Right ventricle myocardium inferior (tissue), 1 donor: ENCODE measurements at regions of chr14 and their contacts with region 1.

Region 1: GRCh38 chr14:92783816-92784431 is 10.2 kb upstream of the GOLGA5 start:
- DNase-seq: no peak
- ATAC-seq: peak; percentile 56

Region 2: GRCh38 chr14:92686900-92687444 is 97.0 kb before region 1 on chr14:
- intact Hi-C with region 1: loop called (anchors 2 kb)
- DNase-seq: peak; percentile 91
- ATAC-seq: peak; percentile 88

Region 3: DNA sequence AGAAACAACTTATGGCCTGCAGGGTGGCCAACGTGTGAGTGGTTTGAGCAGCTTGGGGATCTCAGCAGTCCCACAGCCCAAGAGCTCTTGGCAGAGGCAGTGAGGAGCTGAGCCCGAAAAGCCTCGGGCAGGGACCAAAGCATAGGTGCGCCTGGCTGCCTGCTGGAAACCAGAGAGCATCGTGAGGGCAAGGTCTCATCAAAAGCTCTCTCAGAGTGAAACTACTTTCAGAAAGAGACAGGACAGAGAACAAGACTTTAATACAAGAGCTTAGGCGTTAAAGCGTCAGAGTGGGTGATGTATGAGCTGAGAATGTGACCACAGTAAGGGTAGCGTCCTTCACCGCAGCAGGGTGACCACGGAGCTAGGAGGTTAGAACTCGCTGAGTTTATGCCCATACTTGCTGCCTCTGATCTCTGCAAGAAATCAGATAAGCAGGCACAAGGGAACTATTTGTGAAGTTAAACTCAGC is 66.3 kb before region 1 on chr14:
- intact Hi-C with region 1: loop called (anchors 1 kb)
- DNase-seq: no peak
- ATAC-seq: no peak

Region 4: DNA sequence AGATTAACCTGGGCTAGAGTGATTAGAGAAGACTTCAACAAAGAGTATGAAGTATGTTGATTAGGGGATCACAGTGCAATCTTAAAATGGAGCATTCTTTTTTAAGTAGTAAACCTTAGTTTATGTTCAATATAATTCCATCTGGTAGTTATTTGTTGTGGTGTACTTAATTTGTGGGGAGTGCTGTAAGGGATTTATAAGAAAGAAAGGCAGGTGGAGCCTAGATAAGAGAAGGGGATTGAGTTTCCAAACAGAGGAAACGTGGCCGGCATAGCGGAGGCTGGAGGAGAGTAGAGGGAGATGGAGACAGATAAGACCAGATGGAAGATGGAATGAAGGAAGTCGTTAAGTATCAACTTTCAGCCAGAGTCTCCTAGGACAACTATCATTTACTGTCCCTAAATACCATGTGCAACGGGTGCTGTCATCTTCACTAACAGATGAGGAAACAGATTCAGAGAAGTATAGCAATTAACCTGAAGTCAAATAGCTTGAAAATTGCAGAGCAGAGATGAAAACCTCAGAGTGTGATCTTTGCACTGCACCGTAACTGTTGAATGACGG is 48.3 kb after region 1 on chr14:
- intact Hi-C with region 1: no loop called
- DNase-seq: no peak
- ATAC-seq: no peak